GM12878 (cell line): ENCODE measurements at regions of chr17 and their contacts with region 1.

Region 1: DNA sequence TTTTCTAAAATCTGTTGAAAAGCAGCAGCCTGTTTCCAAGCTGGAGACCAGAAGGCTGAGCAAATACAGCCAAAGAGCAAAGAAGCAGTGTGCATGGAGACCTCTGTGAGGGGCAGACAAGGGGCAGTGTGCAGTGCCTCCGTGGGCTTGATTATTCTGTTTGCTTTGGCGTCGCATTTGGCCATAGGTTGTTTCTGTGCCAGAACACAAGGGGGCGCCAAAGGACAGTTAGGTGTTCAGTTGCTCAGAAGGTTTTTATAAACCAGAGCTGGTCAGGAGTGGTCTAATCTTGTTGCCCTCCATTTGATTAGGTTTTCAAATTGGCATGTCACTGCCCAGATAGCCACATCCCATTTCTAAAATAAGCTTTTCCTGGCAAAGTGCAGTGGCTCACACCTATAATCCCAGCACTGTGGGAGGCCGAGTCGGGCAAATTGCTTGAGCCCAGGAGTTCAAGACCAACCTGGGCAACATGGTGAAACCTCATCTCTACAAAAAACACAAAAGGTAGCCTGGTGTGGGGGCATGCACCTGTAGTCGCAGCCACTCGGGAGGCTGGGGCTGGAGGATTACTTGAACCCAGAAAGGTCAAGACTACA is 10.6 kb downstream of the MYH3 start:
- DNase-seq: no peak
- ATAC-seq: peak; percentile 92
- H3K4me3 ChIP-seq: no peak overlapping the region
- H3K27ac ChIP-seq: no peak overlapping the region
- H3K4me1 ChIP-seq: no peaks in the 10 kb centered on the region
- H3K27me3 ChIP-seq: no peaks in the 10 kb centered on the region
- CTCF ChIP-seq: peak; percentile 83 to 85 (median 84)
- EP300 ChIP-seq: no peak
- POLR2A ChIP-seq: no peak
- RAD21 ChIP-seq: peak; percentile 84

Region 2: DNA sequence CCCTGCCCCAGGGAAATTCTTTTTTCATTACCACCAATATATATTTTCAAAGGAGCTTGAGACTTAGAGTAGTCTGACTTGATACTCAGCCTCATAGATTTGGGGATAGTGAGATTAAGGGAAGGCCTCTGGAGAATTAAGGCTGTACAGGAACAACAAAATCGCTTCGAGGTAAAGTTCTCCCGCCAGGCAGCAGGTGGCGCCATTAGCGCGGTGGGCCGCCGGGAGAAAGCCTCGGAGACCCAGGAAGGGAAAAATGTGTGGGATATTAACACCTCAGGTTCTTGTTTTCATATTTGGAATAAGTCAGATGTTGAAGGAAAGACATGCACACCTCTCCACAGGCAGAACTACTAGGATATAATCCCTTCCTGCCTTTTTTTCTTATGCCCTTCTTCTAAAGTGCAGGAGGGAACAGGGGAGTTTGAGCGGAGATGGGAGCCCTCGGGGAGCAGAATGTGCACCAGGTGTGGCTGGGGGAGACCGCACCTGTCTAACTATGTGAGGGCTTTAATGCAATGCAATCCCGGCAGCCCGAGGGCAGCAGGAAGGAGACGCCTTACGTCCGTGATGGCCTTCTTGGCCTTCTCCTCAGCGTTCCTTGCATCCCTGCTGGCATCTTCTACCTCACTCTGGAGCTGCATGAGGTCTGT is 15.3 kb before region 1 on chr17:
- CTCF ChIA-PET with region 1: interaction called, 48 read pairs
- POLR2A ChIA-PET with region 1: no interaction called
- RAD21 ChIA-PET with region 1: interaction called, 13 read pairs
- SMC1A ChIA-PET with region 1: interaction called, 10 read pairs
- in situ Hi-C with region 1: no loop called
- intact Hi-C with region 1: no loop called
- DNase-seq: no peak
- ATAC-seq: 0 out of 3 replicates have a peak, but pooled peaks have one; percentile 29
- H3K4me3 ChIP-seq: no peak overlapping the region
- H3K27ac ChIP-seq: no peak overlapping the region
- H3K4me1 ChIP-seq: peaks cover 21% of the 10 kb centered on the region
- H3K27me3 ChIP-seq: no peaks in the 10 kb centered on the region
- CTCF ChIP-seq: peak; percentile 66 to 92 (median 89)
- EP300 ChIP-seq: no peak
- POLR2A ChIP-seq: no peak
- RAD21 ChIP-seq: peak; percentile 61

Region 3: DNA sequence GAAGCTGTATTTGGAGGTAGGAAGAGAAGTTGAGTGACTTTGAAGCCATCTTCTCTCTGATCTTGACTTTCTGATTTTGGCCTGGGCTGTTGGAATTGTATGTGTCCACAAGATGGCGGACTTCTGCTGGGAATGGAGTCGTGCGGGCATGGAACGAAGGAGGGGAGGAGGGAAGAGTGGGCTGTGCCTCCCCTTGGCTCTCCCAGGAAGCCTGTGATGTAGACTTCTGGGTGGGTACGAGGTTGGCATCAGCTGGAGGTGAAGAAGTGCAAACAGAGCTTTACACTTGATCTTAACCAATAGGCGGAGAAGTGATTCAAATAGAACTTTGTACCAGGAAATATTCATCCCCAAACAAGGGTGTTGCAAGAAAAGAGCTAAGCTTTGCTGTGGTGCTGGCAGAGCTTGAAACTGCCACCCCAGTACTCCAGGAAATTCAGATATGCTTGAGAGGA is 90.7 kb after region 1 on chr17:
- CTCF ChIA-PET with region 1: interaction called, 10 read pairs
- POLR2A ChIA-PET with region 1: no interaction called
- RAD21 ChIA-PET with region 1: no interaction called
- SMC1A ChIA-PET with region 1: interaction called, 3 read pairs
- in situ Hi-C with region 1: no loop called
- intact Hi-C with region 1: no loop called
- DNase-seq: no peak
- ATAC-seq: peak; percentile 67
- H3K4me3 ChIP-seq: no peak overlapping the region
- H3K27ac ChIP-seq: no peak overlapping the region
- H3K4me1 ChIP-seq: no peaks in the 10 kb centered on the region
- H3K27me3 ChIP-seq: no peaks in the 10 kb centered on the region; a peak in 1 of 4 replicates
- CTCF ChIP-seq: peak; percentile 64 to 66 (median 66)
- EP300 ChIP-seq: no peak
- POLR2A ChIP-seq: no peak
- RAD21 ChIP-seq: peak; percentile 70

Region 4: DNA sequence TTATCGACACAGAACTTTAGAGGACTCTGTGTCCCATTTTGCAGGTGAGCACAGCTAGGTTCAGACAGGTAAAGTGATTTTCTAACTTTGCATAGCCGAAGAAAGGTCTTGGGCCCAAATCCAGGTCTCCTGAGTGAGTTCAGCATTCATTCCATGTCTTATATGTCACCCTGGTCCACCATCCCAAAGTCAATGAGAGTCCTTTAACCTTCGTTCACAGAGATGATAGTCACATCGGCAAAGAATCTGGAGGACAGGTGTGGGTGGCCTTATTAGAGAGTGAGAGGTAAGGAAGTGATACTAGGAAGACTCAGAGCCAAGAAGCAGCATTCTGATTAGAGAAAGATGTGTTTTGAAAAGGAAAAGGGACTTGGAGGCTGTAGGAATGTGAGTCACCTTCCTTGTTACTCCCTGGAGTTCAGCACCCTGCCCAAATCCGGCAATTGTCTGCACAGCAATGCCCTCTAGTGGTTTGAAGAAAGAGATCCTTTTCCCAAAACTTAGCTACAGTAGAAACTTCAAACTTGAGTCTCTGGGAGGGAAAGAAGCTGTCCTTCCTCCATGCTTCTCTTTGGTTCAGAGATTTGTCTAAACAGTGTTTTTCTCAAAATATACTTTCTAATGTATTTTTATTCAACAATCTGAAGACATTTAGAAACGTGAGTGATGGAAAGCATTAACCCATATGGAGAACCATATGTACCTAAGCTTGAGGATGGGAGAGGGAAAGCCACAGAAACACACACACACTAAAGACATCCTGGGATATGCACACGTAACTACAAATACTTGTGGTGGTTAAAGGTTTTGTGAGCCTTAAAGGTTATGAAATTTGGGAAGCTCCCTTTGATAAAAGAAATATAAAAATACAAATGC is 498.1 kb after region 1 on chr17:
- CTCF ChIA-PET with region 1: interaction called, 3 read pairs
- POLR2A ChIA-PET with region 1: no interaction called
- RAD21 ChIA-PET with region 1: no interaction called
- SMC1A ChIA-PET with region 1: no interaction called
- in situ Hi-C with region 1: loop called (anchors 25 kb)
- intact Hi-C with region 1: no loop called
- DNase-seq: no peak
- ATAC-seq: no peak
- H3K4me3 ChIP-seq: no peak overlapping the region
- H3K27ac ChIP-seq: no peak overlapping the region
- H3K4me1 ChIP-seq: no peaks in the 10 kb centered on the region
- H3K27me3 ChIP-seq: no peaks in the 10 kb centered on the region
- CTCF ChIP-seq: peak in 2 of 3 experiments; percentile 29 to 36; a peak in 2 of 6 replicates
- EP300 ChIP-seq: no peak
- POLR2A ChIP-seq: no peak
- RAD21 ChIP-seq: no peak

Region 5: DNA sequence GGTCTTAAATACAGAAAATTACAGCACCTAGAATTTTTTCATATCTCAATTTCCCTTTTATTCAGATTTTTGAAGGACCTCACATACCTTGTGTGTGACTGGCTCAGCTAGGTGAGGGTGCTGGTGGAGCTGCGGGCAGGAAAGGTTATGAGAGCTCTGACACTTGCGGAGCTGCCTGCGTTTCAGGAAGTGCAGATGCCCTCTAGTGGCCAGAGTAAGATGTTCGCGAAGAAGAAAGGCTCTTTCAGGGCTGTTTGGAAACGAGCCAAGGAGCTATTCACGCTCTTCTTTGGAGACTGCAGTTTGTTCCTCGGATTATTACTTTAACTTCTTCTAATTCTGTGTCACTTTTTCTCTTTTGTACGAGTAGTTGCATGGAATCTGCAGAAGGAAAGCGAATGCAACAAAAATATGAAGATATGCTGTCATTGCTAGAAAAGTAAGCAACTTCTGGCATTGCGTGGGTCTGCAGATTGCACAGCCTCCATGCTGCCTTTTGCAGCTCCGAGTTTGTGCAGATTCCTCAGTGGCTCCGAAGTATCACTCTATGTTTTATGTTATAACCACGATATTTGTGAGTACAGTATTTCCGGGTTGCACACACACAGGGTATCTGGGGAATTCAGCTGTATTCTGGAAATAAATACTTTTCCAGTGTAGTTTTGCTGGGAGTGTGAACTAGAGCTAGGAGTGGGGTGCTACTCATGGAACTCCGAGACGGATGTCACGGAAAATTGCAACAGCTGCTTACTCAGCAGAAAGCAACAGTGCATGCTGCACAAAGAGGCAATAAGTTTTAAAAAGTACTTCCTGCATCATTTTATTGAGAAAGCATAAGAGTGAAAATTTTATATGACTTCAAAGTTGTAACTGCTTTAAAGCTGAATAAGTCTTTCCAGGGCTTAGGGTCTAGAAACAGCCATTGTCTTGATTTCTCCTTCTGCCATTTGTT is 998.0 kb after region 1 on chr17:
- CTCF ChIA-PET with region 1: interaction called, 3 read pairs
- POLR2A ChIA-PET with region 1: no interaction called
- RAD21 ChIA-PET with region 1: no interaction called
- SMC1A ChIA-PET with region 1: interaction called, 4 read pairs
- in situ Hi-C with region 1: loop called (anchors 25 kb)
- intact Hi-C with region 1: no loop called
- DNase-seq: no peak
- ATAC-seq: peak; percentile 48; the same call in 2 of the 3 replicates
- H3K4me3 ChIP-seq: no peak overlapping the region
- H3K27ac ChIP-seq: no peak overlapping the region
- H3K4me1 ChIP-seq: no peaks in the 10 kb centered on the region
- H3K27me3 ChIP-seq: no peaks in the 10 kb centered on the region
- CTCF ChIP-seq: peak; percentile 60 to 77 (median 72)
- EP300 ChIP-seq: no peak
- POLR2A ChIP-seq: no peak
- RAD21 ChIP-seq: peak; percentile 31